Activated naive CD4-positive, alpha-beta T cell treated with anti-CD3 and anti-CD28 coated beads for 36 hours (primary cell): ENCODE measurements at regions of chr21 and their contacts with region 1.

Region 1: DNA sequence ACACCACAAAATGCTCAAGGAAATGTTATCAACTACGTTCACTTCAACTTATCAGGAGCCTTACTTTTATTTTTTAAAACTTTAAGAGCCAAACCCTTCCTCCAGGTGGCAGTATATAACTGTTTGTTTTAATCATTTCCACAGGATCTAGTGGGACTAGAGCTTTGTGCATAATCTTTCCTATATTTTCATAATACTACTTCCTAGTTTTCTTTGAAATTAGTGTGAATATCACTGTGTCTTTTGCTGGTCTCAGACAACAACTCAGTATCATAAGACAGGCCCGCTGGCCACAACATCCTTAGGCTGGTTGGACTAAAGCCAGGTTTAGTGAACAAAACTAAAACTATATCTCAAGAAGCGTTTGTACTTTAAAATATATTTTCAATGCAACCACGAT is 145.5 kb downstream of the TIAM1 start:
- DNase-seq: no peak
- H3K4me3 Mint-ChIP-seq: no peak overlapping the region
- H3K27ac Mint-ChIP-seq: no peak overlapping the region
- H3K4me1 Mint-ChIP-seq: peaks cover 51% of the 10 kb centered on the region
- H3K27me3 Mint-ChIP-seq: no peaks in the 10 kb centered on the region

Region 2: DNA sequence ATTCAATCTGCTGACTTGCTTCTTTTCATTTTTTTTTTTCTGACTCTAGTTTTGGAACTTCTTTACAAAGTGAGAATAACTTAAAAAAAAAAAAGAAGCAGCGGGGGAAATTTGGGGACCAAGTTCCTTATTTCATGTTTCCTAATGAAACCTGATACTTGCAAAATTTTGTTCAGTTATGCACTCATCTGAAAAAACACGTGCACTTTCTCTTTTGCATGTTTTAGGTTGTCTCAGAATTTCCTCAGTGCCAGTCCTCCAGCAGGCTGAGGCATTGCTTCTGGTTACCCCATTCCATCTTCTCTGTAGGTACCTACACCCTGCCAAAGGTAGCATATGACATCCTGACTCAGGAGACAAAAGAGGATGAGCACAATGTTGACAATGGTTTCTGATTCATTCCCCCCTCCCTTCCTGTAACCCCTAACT is 1558.5 kb before region 1 on chr21:
- CTCF ChIA-PET with region 1: no interaction called
- intact Hi-C with region 1: no loop called
- DNase-seq: no peak
- H3K4me3 Mint-ChIP-seq: no peak overlapping the region
- H3K27ac Mint-ChIP-seq: no peak overlapping the region
- H3K4me1 Mint-ChIP-seq: peaks cover 8% of the 10 kb centered on the region
- H3K27me3 Mint-ChIP-seq: peaks cover 3% of the 10 kb centered on the region

Region 3: DNA sequence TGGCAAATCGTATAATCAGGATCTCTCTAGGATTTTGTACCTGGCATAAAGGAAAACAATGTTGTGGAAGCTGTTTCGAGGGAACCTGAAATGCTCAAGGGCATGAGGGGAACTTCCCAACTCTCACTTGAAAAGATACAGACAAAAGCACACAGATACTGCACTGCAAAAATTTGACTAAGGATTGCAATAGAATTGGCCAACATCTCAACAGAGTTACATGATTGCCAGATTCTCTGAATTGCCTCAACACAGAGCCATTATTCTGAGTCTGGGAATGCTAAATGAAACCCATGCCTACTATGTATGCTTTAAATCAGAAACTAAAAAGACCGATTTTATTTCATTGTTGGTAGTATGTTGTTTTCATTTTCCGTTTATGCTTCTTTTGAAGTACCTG is 176.3 kb before region 1 on chr21:
- CTCF ChIA-PET with region 1: no interaction called
- intact Hi-C with region 1: no loop called
- DNase-seq: no peak
- H3K4me3 Mint-ChIP-seq: no peak overlapping the region
- H3K27ac Mint-ChIP-seq: no peak overlapping the region
- H3K4me1 Mint-ChIP-seq: no peaks in the 10 kb centered on the region
- H3K27me3 Mint-ChIP-seq: peaks cover 15% of the 10 kb centered on the region

Region 4: DNA sequence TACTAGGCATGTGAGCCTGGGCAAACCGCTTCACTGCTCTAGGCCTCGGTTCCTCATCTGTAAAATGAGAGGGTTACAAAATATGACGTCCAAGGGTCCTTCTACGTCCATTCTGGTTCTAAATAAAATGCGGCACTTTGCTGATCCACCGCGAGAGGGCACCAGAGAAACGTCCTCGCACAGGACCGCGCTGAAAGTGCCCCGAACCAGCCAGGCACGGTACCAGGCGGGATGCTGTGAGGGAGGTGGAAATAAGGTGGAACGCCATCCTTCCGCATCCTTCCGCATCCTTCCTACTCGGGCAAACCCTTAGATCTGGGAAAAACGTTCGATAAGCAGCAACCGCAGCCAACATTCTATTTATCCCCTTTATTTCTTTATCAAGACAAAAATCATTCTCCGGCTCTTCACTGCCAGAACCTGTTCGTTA is 100.0 kb before region 1 on chr21:
- CTCF ChIA-PET with region 1: interaction called, 10 read pairs
- intact Hi-C with region 1: loop called (anchors 1 kb)
- DNase-seq: peak; percentile 83
- H3K4me3 Mint-ChIP-seq: peak overlapping the region; percentile 29
- H3K27ac Mint-ChIP-seq: no peak overlapping the region
- H3K4me1 Mint-ChIP-seq: peaks cover 24% of the 10 kb centered on the region
- H3K27me3 Mint-ChIP-seq: peaks cover 3% of the 10 kb centered on the region

Region 5: GRCh38 chr21:31107871-31108270 is 90.7 kb before region 1 on chr21:
- CTCF ChIA-PET with region 1: interaction called, 6 read pairs
- intact Hi-C with region 1: loop called (anchors 1 kb)
- DNase-seq: no peak
- H3K4me3 Mint-ChIP-seq: no peak overlapping the region
- H3K27ac Mint-ChIP-seq: no peak overlapping the region
- H3K4me1 Mint-ChIP-seq: peaks cover 28% of the 10 kb centered on the region
- H3K27me3 Mint-ChIP-seq: no peaks in the 10 kb centered on the region

Region 6: GRCh38 chr21:31293986-31294385 is 95.4 kb after region 1 on chr21:
- CTCF ChIA-PET with region 1: no interaction called
- intact Hi-C with region 1: no loop called
- DNase-seq: peak; percentile 88
- H3K4me3 Mint-ChIP-seq: no peak overlapping the region
- H3K27ac Mint-ChIP-seq: peak overlapping the region; percentile 84
- H3K4me1 Mint-ChIP-seq: peaks cover 44% of the 10 kb centered on the region
- H3K27me3 Mint-ChIP-seq: no peaks in the 10 kb centered on the region

Region 7: DNA sequence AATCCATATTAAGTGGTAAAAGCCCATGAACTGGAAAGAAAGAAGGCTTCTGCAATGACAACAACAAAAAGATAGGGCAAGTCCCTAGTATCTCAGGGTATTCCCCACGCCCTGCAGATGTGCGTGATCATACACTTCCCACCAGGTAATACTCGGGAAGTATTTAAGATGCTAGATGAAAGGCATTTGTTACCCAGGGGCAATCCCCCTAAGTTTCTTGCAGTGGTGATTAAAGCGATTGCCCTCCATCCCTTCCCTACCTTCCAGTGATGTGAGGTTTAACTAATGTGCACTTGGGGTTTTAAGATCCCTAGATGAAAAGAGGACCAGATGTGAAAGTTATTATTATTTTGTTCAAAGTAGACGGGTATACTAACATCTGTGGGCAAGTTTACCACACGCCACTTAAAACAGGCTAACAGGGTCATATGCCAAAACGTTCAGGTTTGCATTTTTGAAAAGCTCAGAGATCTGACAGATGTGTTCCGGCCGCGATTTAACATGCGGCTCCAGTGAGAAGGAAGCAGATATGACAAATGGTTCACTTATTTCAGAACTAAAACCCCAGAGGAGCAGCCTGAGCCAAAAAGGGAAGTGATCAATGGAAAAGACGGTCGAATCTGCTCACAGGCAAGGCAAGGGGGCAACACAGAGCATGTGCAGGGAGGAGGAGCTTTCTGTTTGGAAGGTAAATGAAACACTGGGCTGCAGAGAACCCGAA is 128.1 kb after region 1 on chr21:
- CTCF ChIA-PET with region 1: interaction called, 3 read pairs
- intact Hi-C with region 1: loop called (anchors 1 kb)
- DNase-seq: peak; percentile 83
- H3K4me3 Mint-ChIP-seq: peak overlapping the region; percentile 45
- H3K27ac Mint-ChIP-seq: peak overlapping the region; percentile 92
- H3K4me1 Mint-ChIP-seq: peaks cover 37% of the 10 kb centered on the region
- H3K27me3 Mint-ChIP-seq: no peaks in the 10 kb centered on the region

Region 8: GRCh38 chr21:31410499-31411131 is 212.0 kb after region 1 on chr21:
- CTCF ChIA-PET with region 1: no interaction called
- intact Hi-C with region 1: loop called (anchors 5 kb)
- DNase-seq: peak; percentile 62
- H3K4me3 Mint-ChIP-seq: no peak overlapping the region
- H3K27ac Mint-ChIP-seq: no peak overlapping the region
- H3K4me1 Mint-ChIP-seq: peaks cover 10% of the 10 kb centered on the region
- H3K27me3 Mint-ChIP-seq: no peaks in the 10 kb centered on the region

Region 9: DNA sequence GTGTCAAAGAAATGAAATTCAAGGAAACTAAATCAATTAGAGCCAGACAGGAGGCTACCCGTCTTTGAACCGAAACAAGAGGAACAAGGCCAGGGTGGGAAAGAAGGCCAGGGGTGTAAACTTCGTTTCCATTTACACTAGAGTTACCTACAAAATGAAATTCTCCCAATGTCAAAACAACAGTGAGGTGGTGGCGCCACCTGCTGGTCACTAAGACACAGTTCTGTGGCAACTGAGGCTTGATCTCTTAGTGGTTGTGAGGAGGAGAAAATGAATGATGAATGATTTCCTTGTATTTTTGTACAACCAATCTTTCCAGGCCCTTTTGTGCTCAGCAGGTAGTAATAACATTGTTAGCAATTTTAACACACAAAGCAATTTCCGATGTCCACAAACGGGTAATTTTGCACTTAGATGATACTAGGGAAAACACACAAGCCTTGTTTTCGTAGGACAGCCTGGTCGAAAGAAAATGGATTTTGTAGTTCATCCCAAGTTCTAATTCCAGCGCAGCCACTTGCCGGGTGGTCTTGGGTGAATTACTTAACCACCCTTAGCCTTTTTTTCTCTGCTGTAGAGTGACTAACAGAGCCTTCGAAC is 406.1 kb after region 1 on chr21:
- CTCF ChIA-PET with region 1: interaction called, 5 read pairs
- intact Hi-C with region 1: loop called (anchors 1 kb)
- DNase-seq: peak; percentile 83
- H3K4me3 Mint-ChIP-seq: no peak overlapping the region
- H3K27ac Mint-ChIP-seq: no peak overlapping the region
- H3K4me1 Mint-ChIP-seq: peaks cover 7% of the 10 kb centered on the region
- H3K27me3 Mint-ChIP-seq: no peaks in the 10 kb centered on the region

Region 10: DNA sequence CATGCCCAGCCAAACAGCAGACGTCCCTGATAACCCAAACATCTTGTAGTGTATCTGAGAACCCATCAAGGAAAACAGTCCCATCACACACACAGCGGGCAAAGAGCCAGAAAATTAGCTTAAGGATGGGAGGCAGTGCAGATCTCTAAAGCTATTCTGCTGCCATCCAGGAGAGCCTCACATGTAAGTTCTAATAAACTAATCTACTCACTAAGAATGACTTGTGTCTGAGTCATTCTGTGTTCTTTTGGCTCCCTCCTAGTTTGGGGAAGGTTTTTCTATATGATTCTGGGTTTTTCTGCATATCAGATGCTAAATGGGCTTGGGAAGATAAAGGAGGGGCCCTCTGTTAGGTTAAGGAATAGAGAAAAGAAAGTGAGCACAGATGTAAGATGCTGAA is 837.0 kb after region 1 on chr21:
- CTCF ChIA-PET with region 1: no interaction called
- intact Hi-C with region 1: no loop called
- DNase-seq: no peak
- H3K4me3 Mint-ChIP-seq: no peak overlapping the region
- H3K27ac Mint-ChIP-seq: no peak overlapping the region
- H3K4me1 Mint-ChIP-seq: no peaks in the 10 kb centered on the region
- H3K27me3 Mint-ChIP-seq: peaks cover 10% of the 10 kb centered on the region